ENCODE measurements at regions of chr10 and their contacts with region 1.

Region 1: GRCh38 chr10:112122827-112123226 is 60.7 kb downstream of the GPAM start:
- DNase-seq: no peak
- H3K4me3 ChIP-seq: no peak overlapping the region
- H3K27ac ChIP-seq: no peak overlapping the region
- H3K27me3 ChIP-seq: peaks cover 5% of the 10 kb centered on the region
- CTCF ChIP-seq: no peak

Region 2: DNA sequence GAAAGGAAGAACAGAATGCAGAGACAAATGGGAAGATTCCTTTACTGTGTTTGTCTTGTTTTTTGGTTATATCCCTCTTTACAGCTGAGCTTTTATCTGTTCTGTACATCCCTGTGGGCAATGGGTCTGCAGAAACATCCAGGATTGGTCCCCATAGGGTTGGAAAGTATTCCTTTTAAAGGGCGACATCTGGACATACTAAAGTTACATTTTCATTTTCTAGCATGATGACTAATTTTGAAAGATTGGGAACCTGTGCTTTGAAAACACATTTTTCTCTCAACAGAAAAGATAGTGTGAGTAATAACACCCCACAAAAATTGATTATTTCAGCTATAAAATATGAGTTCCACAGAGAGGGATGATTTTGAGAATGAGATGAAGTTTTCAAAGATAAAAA is 375.1 kb before region 1 on chr10:
- CTCF ChIA-PET with region 1: no interaction called
- POLR2A ChIA-PET with region 1: no interaction called
- DNase-seq: no peak
- H3K4me3 ChIP-seq: no peak overlapping the region
- H3K27ac ChIP-seq: no peak overlapping the region
- H3K27me3 ChIP-seq: no peaks in the 10 kb centered on the region
- CTCF ChIP-seq: no peak

Region 3: GRCh38 chr10:111944331-111944730 is 178.5 kb before region 1 on chr10:
- CTCF ChIA-PET with region 1: no interaction called
- POLR2A ChIA-PET with region 1: no interaction called
- DNase-seq: no peak
- H3K4me3 ChIP-seq: no peak overlapping the region
- H3K27ac ChIP-seq: no peak overlapping the region
- H3K27me3 ChIP-seq: no peaks in the 10 kb centered on the region
- CTCF ChIP-seq: no peak

Region 4: DNA sequence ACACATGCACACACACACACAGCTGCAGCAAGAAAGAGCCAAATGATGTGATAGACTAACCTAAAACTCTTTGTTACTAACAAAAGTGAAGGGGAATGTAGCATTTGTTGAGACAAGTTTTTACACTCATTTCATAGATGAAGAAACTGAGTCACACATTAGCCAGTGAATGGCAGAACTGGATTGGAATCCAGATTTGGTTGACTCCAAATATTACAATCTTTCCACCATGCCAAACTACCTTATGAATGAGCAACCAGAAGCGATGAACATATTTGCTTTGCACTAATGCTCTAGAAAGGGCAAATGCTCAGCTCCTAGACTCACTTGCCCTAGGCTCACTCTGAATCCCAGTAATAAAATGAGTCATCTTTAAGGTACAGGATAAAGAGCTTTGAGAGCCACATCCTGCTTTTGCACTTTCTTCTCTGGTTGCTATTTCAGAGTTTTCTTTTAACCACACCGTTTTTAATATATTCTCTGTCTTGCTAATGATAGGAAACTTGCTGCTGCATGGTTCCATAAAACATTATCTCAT is 51.2 kb before region 1 on chr10:
- CTCF ChIA-PET with region 1: interaction called, 11 read pairs
- POLR2A ChIA-PET with region 1: no interaction called
- DNase-seq: no peak
- H3K4me3 ChIP-seq: no peak overlapping the region
- H3K27ac ChIP-seq: no peak overlapping the region
- H3K27me3 ChIP-seq: no peaks in the 10 kb centered on the region
- CTCF ChIP-seq: no peak

Measured in AG04450 (cell line).